ENCODE measurements at regions of chr11 and their contacts with region 1.

Region 1: DNA sequence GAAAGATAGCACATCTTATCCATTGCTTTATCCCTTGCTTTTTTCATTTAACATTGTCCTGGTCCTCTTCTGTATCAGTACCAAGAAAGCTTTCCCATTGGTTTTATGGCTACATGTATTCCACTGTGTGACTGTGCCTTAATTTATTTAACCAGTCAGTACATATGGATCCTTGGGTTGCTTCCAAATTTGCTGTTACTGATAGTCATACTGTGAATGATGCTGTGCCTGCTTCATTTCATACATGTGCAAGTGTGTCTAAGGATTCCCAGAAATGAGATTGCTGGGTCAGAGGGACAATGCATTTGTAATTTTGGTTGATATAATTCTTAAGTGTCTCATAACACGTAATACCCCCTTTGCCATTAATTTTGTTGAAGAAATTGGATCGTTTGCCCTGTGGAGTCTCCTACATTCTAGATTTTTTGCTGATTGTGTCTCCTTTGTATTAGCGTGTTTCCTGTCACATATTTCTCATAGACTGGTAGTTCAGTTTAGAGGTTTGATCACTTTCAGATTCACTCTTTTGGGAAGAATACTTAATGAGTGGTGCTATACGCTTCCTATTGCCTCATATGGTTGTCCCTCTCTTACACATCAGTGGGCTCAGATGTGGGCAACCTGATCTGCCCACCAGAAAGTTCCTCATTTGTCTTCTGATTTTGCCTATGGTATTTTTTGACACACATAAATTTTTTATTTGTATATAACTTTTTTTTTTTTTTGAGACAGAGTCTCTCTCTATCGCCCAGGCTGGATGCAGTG is 35.3 kb downstream of the MYBPC3 start:
- DNase-seq: no peak
- H3K4me3 ChIP-seq: no peak overlapping the region
- H3K4me3 Mint-ChIP-seq: no peak overlapping the region
- H3K27ac ChIP-seq: no peak overlapping the region
- H3K27ac Mint-ChIP-seq: peak overlapping the region in 5 of 7 donors; percentile 12 to 82 (median 24)
- H3K4me1 ChIP-seq: no peaks in the 10 kb centered on the region
- H3K4me1 Mint-ChIP-seq: peaks cover 0 to 4% (median 0%) of the 10 kb centered on the region in 4 donors
- H3K27me3 ChIP-seq: no peaks in the 10 kb centered on the region
- H3K27me3 Mint-ChIP-seq: no peaks in the 10 kb centered on the region

Region 2: DNA sequence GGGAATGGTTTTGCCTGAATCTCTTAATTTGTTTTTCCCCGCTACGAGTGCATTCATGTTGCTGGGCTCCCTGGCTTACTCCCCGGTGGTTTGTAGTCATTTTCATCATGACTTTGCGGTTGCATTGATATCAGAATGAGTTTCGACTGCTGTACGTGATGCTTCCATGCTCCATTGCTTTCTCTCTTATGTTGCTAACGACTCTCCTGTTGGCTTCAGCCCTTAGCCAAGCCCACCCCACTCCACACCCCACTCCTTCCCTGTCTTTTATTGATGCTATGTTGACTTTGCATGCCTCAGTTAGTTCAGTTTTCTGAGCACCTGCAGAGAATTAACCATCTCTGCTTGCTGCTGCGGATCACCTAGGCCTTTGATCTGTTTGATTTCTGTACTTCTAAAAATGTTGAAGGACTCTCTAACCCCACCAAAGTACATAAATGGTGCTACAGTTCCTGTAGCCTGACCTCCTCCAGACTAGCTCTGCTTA is 205.9 kb before region 1 on chr11:
- CTCF ChIA-PET with region 1: no interaction called
- POLR2A ChIA-PET with region 1: no interaction called
- intact Hi-C with region 1: no loop called
- DNase-seq: no peak
- H3K4me3 ChIP-seq: no peak overlapping the region
- H3K4me3 Mint-ChIP-seq: no peak overlapping the region
- H3K27ac ChIP-seq: no peak overlapping the region
- H3K27ac Mint-ChIP-seq: no peak overlapping the region
- H3K4me1 ChIP-seq: no peaks in the 10 kb centered on the region
- H3K4me1 Mint-ChIP-seq: no peaks in the 10 kb centered on the region
- H3K27me3 ChIP-seq: no peaks in the 10 kb centered on the region
- H3K27me3 Mint-ChIP-seq: no peaks in the 10 kb centered on the region

Region 3: GRCh38 chr11:47305734-47306483 is 11.3 kb before region 1 on chr11:
- CTCF ChIA-PET with region 1: interaction called, 11 read pairs
- POLR2A ChIA-PET with region 1: no interaction called
- intact Hi-C with region 1: no loop called
- DNase-seq: no peak
- H3K4me3 ChIP-seq: no peak overlapping the region
- H3K4me3 Mint-ChIP-seq: no peak overlapping the region
- H3K27ac ChIP-seq: no peak overlapping the region
- H3K27ac Mint-ChIP-seq: peak overlapping the region in 4 of 7 donors; percentile 7 to 27 (median 14)
- H3K4me1 ChIP-seq: no peaks in the 10 kb centered on the region
- H3K4me1 Mint-ChIP-seq: peaks cover 2 to 5% (median 4%) of the 10 kb centered on the region in 4 donors
- H3K27me3 ChIP-seq: no peaks in the 10 kb centered on the region
- H3K27me3 Mint-ChIP-seq: no peaks in the 10 kb centered on the region